Dendritic cell treated with granulocyte-macrophage colony-stimulating factor and Interleukin-4, amounts not matched to agents 40 ng/mL and 50 ng/mL, for 4 days (primary cell): ENCODE measurements at regions of chrX and their contacts with region 1.

Region 1: DNA sequence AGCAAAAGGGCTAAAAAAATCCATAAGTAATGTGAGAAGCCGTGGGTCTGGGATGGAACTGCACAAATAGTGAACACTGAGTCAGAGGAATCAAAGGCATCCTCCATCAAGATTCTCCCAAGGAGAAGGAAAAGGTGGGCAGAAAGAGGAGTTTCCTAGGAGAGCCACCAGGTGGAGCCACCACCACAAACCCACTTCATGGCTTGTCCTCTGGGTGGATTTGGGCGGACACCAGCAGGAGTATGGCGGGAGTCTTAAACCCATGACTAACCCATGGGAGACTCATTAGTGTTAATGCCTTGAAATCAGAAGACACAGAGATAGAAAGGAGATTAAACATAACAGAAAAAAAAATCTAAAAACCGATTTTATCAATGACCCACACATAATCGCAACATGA is 147.7 kb downstream of the SH3KBP1 start:
- H3K4me3 Mint-ChIP-seq: no peak overlapping the region
- H3K27ac Mint-ChIP-seq: no peak overlapping the region
- H3K4me1 Mint-ChIP-seq: peaks cover 7% of the 10 kb centered on the region
- H3K27me3 Mint-ChIP-seq: no peaks in the 10 kb centered on the region

Region 2: GRCh38 chrX:19326567-19326966 is 413.1 kb before region 1 on chrX:
- intact Hi-C with region 1: no loop called
- H3K4me3 Mint-ChIP-seq: no peak overlapping the region
- H3K27ac Mint-ChIP-seq: no peak overlapping the region
- H3K4me1 Mint-ChIP-seq: no peaks in the 10 kb centered on the region
- H3K27me3 Mint-ChIP-seq: peaks cover 4% of the 10 kb centered on the region

Region 3: GRCh38 chrX:19593690-19594089 is 146.0 kb before region 1 on chrX:
- intact Hi-C with region 1: loop called (anchors 10 kb)
- H3K4me3 Mint-ChIP-seq: no peak overlapping the region
- H3K27ac Mint-ChIP-seq: no peak overlapping the region
- H3K4me1 Mint-ChIP-seq: peaks cover 13% of the 10 kb centered on the region
- H3K27me3 Mint-ChIP-seq: no peaks in the 10 kb centered on the region

Region 4: DNA sequence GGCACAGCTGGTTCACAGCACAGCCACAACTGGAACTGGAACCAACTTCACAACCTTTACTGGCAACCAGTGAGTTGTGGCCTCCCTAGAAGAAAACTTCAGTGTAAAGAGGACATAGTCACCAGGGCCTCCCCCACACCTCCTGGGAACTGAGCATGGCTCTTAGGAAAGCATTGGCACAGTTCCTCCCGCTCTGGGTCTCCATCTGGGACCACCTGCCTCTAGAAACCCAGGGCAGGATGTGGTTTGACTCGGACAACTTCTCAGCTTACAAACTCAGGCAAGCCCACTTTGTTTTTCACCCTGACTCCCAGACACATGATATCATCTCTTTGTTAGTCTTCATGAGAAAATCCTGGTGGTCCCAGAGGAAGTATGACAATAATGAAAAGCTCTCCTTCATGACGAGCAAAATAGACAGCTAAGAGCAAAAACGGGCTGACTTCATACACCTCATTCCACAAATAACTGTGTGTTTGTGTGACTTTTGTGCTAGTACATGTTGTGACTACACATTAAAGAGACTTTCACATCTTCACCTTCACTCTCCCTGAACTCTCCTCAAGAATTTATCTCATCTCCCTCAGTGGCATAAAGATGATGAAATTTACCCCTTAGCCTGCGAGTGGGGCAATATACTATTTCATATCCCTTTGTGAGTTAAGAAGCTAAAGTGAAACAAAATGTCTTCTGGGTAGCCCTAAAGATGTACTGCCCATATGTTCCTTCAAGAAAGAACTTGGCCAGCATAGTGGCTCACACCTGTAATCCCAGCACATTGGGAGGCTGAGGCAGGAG is 72.3 kb after region 1 on chrX:
- intact Hi-C with region 1: loop called (anchors 5 kb)
- H3K4me3 Mint-ChIP-seq: no peak overlapping the region
- H3K27ac Mint-ChIP-seq: peak overlapping the region; percentile 62
- H3K4me1 Mint-ChIP-seq: peaks cover 38% of the 10 kb centered on the region
- H3K27me3 Mint-ChIP-seq: no peaks in the 10 kb centered on the region

Region 5: GRCh38 chrX:19887911-19888879 is 148.5 kb after region 1 on chrX:
- intact Hi-C with region 1: loop called (anchors 1 kb)
- H3K4me3 Mint-ChIP-seq: peak overlapping the region; percentile 80
- H3K27ac Mint-ChIP-seq: peak overlapping the region; percentile 41
- H3K4me1 Mint-ChIP-seq: peaks cover 26% of the 10 kb centered on the region
- H3K27me3 Mint-ChIP-seq: no peaks in the 10 kb centered on the region